ENCODE measurements at regions of chr5 and their contacts with region 1.

Region 1: DNA sequence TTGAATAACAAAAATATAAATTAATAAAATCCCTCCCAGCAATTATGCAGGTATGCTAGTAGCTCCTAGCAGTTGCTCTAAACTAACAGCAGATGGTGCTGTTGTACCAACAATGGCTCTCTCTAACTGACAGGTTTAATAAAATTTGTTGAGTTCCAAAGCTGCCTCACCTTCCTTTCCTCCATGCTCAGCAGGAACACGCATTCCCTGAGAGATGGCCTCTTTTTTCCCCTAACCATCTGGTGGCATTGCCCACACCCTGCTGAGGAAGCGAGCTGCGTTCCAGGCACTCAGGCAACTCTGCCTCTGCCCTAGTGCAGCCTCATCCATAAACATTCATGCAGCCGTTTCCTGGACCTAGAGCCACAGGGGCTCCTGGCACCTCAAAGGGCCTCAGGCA is 106.2 kb downstream of the KLHL3 start:
- DNase-seq: no peak
- H3K4me3 Mint-ChIP-seq: no peak overlapping the region
- H3K27ac Mint-ChIP-seq: no peak overlapping the region
- H3K4me1 Mint-ChIP-seq: no peaks in the 10 kb centered on the region
- H3K27me3 Mint-ChIP-seq: no peaks in the 10 kb centered on the region

Region 2: GRCh38 chr5:137743031-137743640 is 113.5 kb after region 1 on chr5:
- intact Hi-C with region 1: loop called (anchors 1 kb)
- DNase-seq: peak; percentile 43
- H3K4me3 Mint-ChIP-seq: no peak overlapping the region
- H3K27ac Mint-ChIP-seq: no peak overlapping the region
- H3K4me1 Mint-ChIP-seq: no peaks in the 10 kb centered on the region
- H3K27me3 Mint-ChIP-seq: no peaks in the 10 kb centered on the region

Region 3: GRCh38 chr5:138065102-138065501 is 435.5 kb after region 1 on chr5:
- intact Hi-C with region 1: loop called (anchors 2 kb)
- DNase-seq: no peak
- H3K4me3 Mint-ChIP-seq: no peak overlapping the region
- H3K27ac Mint-ChIP-seq: no peak overlapping the region
- H3K4me1 Mint-ChIP-seq: peaks cover 4% of the 10 kb centered on the region
- H3K27me3 Mint-ChIP-seq: no peaks in the 10 kb centered on the region

Region 4: DNA sequence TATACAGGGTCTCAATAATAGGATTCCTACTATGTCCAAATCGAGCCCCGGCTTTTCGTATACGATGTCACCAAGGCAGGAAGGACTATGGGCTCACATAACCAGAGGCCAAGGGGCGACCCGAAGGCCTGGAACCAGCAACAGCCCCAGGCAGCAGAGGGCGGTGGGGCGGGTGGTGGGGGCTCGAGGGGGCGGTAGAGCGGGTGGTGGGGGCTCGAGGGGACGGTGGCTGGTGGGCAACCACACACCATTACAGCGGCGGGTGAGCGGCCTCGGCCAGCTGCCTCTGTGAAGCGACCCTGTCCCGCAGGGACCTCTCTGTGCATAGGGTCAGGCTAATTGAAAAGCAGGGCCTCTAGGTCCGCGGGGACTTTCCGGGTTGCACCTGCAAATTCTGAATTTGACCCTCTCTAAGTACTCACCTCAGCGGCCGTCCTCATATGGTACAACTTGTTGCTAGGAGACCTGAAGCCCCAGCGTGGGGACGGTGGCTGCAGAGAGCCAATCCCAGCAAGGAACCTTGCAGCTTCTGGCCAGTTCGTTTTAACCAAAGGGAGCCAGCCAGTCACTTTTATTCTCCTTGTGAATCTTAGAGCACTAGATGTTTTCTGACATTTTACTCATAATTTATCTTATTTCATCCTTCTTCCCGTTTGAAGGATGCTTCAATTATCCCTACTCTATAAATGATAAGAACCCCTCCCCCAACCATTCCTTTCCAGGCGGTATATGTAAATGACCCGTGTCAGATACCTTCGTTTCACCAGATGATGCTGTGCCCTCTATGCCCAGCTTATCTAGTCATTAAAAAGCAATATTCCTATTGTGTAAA is 509.5 kb after region 1 on chr5 and contains the start of gene NME5:
- intact Hi-C with region 1: loop called (anchors 10 kb)
- DNase-seq: no peak
- H3K4me3 Mint-ChIP-seq: no peak within 1 kb of the TSS
- H3K27ac Mint-ChIP-seq: no peak within 1 kb of the TSS
- H3K4me1 Mint-ChIP-seq: no peaks in the 10 kb centered on the region
- H3K27me3 Mint-ChIP-seq: peaks cover 19% of the 10 kb centered on the region
- total RNA-seq, gene NME5: not detected in 2 replicates